ENCODE measurements at regions of chr1 and their contacts with region 1.

Region 1: GRCh38 chr1:203629507-203630082 is 3.0 kb downstream of the ATP2B4 start:
- DNase-seq: peak; percentile 67 to 76 (median 73)
- ATAC-seq: peak; percentile 44
- H3K4me3 ChIP-seq: peak overlapping the region; percentile 14 to 20
- H3K27ac ChIP-seq: peak overlapping the region; percentile 52 to 88 (median 78)
- H3K4me1 ChIP-seq: peaks cover 51% of the 10 kb centered on the region
- H3K27me3 ChIP-seq: no peaks in the 10 kb centered on the region
- CTCF ChIP-seq: no peak
- POLR2A ChIP-seq: peak; percentile 15 to 52 (median 44)

Region 2: GRCh38 chr1:203686091-203686632 is 56.6 kb after region 1 on chr1:
- intact Hi-C with region 1: loop called (anchors 5 kb)
- DNase-seq: no peak
- ATAC-seq: no peak
- H3K4me3 ChIP-seq: no peak overlapping the region
- H3K27ac ChIP-seq: peak overlapping the region in 2 of 4 donors; percentile 11 to 12
- H3K4me1 ChIP-seq: peaks cover 9% of the 10 kb centered on the region
- H3K27me3 ChIP-seq: no peaks in the 10 kb centered on the region
- CTCF ChIP-seq: no peak
- POLR2A ChIP-seq: no peak